ENCODE measurements at regions of chr3 and their contacts with region 1.

Region 1: DNA sequence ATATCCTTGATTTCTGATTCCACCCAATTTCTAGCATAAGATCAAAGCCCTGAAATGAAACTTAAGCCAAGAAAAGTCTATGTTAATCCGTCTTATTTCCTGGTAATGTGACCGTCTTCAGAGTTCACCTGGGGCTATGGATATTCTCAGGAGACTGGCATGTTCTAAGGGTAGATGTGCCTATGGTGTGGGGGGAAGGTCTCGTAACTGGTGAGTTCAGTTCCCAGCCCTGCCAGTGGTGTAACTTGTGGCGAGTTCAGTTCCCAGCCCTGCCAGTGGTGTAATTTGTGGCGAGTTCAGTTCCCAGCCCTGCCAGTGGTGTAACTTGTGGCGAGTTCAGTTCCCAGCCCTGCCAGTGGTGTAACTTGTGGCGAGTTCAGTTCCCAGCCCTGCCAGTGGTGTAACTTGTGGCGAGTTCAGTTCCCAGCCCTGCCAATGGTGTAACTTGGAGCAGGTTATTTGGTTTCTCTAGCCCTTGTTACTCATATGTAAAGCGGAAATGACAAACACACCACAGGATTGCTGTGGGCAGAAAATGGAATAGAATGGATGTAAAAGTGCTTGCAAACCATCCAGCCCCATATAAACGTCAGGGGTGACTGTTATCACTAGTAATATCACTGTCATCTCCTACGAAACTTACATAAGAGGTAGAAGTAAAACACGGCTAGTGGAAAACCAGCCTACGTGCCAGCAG is 30.4 kb downstream of the SLC51A start:
- DNase-seq: peak; percentile 43
- H3K4me3 ChIP-seq: no peak overlapping the region
- H3K27me3 ChIP-seq: no peaks in the 10 kb centered on the region
- CTCF ChIP-seq: no peak

Region 2: DNA sequence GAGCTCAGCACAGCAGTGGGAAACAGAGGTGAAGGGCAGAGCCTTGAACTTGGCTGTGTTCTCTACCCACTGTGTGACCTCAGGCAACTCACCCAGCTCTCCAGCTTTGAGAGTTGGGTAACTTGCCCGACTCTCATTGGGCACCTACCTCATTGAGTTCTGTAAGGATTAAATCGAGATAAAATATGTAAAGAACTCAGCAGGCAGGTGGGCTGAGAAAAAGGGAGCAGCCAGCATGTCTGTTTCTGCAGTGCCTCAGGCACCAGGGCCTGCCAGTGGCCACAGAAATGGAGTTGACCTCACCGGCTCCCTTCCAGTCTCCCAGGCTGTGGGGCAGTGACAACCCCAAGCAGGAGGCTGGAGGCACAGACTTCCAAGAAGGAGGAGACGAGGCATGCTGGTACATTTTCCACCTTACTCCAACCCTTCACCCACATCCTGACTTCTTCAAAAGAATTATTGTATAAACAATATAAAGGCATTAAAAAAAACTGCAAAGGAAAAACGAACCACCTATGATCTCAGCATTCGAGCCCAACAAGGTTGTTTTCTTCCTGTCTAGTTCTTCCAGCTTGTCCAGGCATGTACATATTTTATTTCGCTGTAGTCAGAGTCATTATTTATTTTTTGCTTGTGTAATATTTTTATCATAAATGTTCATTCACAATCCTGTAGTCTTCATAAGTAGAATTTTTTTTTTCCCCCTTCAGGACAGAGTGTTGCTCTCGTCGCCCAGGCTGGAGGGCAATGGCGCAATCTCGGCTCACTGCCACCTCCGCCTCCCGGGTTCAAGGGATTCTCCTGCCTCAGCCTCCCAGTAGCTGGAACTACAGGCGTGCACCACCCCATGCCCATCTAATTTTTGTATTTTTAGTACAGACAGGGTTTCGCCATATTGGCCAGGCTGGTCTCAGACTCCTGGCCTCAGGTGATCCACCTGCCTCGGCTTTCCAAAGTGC is 110.5 kb before region 1 on chr3:
- CTCF ChIA-PET with region 1: no interaction called
- POLR2A ChIA-PET with region 1: no interaction called
- DNase-seq: no peak
- H3K4me3 ChIP-seq: no peak overlapping the region
- H3K27me3 ChIP-seq: 0 out of 2 replicates have a peak, but pooled peaks cover 1% of the 10 kb centered on the region
- CTCF ChIP-seq: no peak

Region 3: DNA sequence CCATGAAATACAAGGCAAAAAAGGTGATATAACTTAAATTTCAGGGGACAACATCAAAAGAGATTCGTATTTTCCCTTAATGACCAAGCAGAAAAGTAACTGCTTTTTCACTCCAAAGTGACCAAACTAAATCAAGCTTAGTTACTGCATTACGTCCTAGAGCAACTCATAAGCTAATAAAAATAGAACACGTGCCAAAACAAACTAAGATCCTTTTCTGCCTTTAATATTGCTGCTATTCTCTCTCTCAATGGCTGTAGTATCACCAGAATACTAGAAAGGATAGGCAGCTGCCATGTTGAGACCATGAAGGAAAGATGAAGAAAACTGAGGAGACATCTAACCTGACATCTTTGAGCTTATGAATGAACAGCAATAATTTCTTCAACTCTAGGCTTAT is 142.2 kb after region 1 on chr3:
- CTCF ChIA-PET with region 1: no interaction called
- POLR2A ChIA-PET with region 1: no interaction called
- DNase-seq: no peak
- H3K4me3 ChIP-seq: no peak overlapping the region
- H3K27me3 ChIP-seq: no peaks in the 10 kb centered on the region
- CTCF ChIP-seq: no peak

Region 4: GRCh38 chr3:196569003-196569516 is 322.3 kb after region 1 on chr3:
- CTCF ChIA-PET with region 1: no interaction called
- POLR2A ChIA-PET with region 1: interaction called, 12 read pairs
- DNase-seq: no peak
- H3K4me3 ChIP-seq: peak overlapping the region; percentile 85
- H3K27me3 ChIP-seq: no peaks in the 10 kb centered on the region
- CTCF ChIP-seq: no peak